SK-N-SH (cell line): ENCODE measurements at regions of chr1 and their contacts with region 1.

Region 1: GRCh38 chr1:23191199-23191598 is 22.5 kb upstream of the LUZP1 start:
- DNase-seq: no peak
- H3K4me3 ChIP-seq: no peak overlapping the region
- H3K27ac ChIP-seq: no peak overlapping the region
- H3K4me1 ChIP-seq: peaks cover 4 to 12% of the 10 kb centered on the region in 2 experiments; a peak in 3 of 4 replicates
- H3K27me3 ChIP-seq: no peaks in the 10 kb centered on the region
- CTCF ChIP-seq: no peak
- EP300 ChIP-seq: no peak
- RAD21 ChIP-seq: no peak

Region 2: GRCh38 chr1:22976461-22977243 is 214.5 kb before region 1 on chr1:
- CTCF ChIA-PET with region 1: interaction called, 159 read pairs
- POLR2A ChIA-PET with region 1: no interaction called
- DNase-seq: peak; percentile 82
- H3K4me3 ChIP-seq: no peak overlapping the region
- H3K27ac ChIP-seq: no peak overlapping the region
- H3K4me1 ChIP-seq: peaks cover 3 to 13% of the 10 kb centered on the region in 2 experiments; a peak in 2 of 4 replicates
- H3K27me3 ChIP-seq: no peaks in the 10 kb centered on the region
- CTCF ChIP-seq: peak; percentile 88
- EP300 ChIP-seq: no peak
- RAD21 ChIP-seq: peak; percentile 91

Region 3: DNA sequence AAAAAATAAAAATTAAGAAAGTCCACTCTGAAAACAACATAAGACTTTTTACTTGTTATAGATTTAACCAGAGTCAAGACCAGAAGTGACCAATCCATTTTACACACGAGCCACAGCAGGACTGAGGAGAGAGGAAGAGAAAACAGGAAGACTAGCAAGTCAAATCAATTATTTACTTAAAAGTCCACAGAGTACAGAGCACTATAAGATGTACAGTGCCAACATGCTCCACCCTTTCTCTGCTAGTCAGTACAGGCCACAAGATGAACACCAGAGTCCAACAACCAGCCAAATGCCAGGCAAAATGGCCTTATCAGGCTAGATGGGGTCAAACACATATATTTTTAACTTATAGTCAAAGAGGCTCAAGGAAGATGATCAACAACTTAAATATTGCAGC is 42.1 kb before region 1 on chr1:
- CTCF ChIA-PET with region 1: no interaction called
- POLR2A ChIA-PET with region 1: no interaction called
- DNase-seq: peak; percentile 23
- H3K4me3 ChIP-seq: no peak overlapping the region
- H3K27ac ChIP-seq: peak overlapping the region in 1 of 2 experiments; percentile 30; a peak in 2 of 4 replicates
- H3K4me1 ChIP-seq: peaks cover 4 to 14% of the 10 kb centered on the region in 2 experiments; a peak in 2 of 4 replicates
- H3K27me3 ChIP-seq: no peaks in the 10 kb centered on the region
- CTCF ChIP-seq: no peak
- EP300 ChIP-seq: no peak; a peak in 1 of 4 replicates
- RAD21 ChIP-seq: no peak